CD4-positive, alpha-beta memory T cell (primary cell): ENCODE measurements at regions of chr19 and their contacts with region 1.

Region 1: DNA sequence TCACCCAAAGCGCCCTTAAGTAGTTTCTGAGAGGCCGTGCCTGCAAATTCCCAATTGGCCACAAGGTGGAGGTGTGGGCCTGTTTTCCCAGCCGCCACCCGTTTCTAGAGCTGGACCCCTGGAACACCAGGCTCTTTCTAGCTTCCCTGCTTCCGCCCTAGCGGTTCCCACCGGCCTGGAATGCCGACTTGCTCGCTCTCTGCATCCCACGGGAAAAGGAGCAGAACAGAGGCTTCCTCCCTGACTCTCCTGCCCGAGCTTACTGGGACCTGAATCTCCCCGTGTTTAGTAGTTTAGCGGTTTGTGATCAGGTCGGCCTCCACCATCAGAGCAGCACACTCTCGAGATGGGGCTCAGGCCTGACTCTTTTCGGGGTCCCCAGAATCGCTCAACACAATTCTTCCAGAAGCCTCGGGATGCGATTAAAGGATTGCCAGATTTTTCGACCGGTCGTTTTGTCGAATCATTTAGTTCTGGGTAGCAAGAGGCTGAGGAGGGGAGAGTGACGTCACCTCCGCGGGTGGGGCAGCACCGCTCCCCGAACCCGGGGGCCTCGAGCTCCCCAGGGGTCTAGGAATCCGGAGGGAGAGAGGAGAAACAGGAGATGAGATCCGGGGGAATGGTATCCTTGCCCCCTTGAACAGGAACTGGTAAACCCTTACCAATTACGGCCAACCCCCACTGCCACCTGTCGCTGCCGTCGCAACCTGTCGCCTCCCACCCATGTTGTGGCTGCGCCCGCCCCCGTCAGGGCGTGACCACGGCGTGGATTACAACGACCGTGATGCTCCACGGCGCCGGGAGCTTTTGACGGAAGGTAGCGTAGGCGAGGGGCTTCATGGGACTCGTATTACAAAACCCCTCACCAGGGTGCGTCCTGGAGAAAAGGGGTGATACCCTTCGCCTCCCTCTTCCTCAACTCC is 8.0 kb downstream of the NAPSA start:
- DNase-seq: peak; percentile 86 to 90 (median 88)
- H3K4me3 ChIP-seq: peak overlapping the region; percentile 45 to 69
- H3K4me3 Mint-ChIP-seq: peak overlapping the region; percentile 88 to 95 (median 91)
- H3K27ac ChIP-seq: peak overlapping the region; percentile 95
- H3K27ac Mint-ChIP-seq: peak overlapping the region; percentile 97 to 98 (median 98)
- H3K4me1 ChIP-seq: peaks cover 12% of the 10 kb centered on the region
- H3K4me1 Mint-ChIP-seq: peaks cover 14 to 47% (median 27%) of the 10 kb centered on the region in 4 donors
- H3K27me3 ChIP-seq: no peaks in the 10 kb centered on the region
- H3K27me3 Mint-ChIP-seq: peaks cover 0 to 2% of the 10 kb centered on the region in 2 donors

Region 2: GRCh38 chr19:50341091-50341564 is 16.3 kb before region 1 on chr19:
- CTCF ChIA-PET with region 1: interaction called, 10 read pairs
- POLR2A ChIA-PET with region 1: interaction called, 15 read pairs
- intact Hi-C with region 1: no loop called
- DNase-seq: no peak
- H3K4me3 ChIP-seq: no peak overlapping the region
- H3K4me3 Mint-ChIP-seq: no peak overlapping the region
- H3K27ac ChIP-seq: no peak overlapping the region
- H3K27ac Mint-ChIP-seq: no peak overlapping the region
- H3K4me1 ChIP-seq: no peaks in the 10 kb centered on the region
- H3K4me1 Mint-ChIP-seq: peaks cover 0 to 1% (median under 1%) of the 10 kb centered on the region in 4 donors
- H3K27me3 ChIP-seq: no peaks in the 10 kb centered on the region
- H3K27me3 Mint-ChIP-seq: peaks cover 1 to 3% of the 10 kb centered on the region in 2 donors

Region 3: DNA sequence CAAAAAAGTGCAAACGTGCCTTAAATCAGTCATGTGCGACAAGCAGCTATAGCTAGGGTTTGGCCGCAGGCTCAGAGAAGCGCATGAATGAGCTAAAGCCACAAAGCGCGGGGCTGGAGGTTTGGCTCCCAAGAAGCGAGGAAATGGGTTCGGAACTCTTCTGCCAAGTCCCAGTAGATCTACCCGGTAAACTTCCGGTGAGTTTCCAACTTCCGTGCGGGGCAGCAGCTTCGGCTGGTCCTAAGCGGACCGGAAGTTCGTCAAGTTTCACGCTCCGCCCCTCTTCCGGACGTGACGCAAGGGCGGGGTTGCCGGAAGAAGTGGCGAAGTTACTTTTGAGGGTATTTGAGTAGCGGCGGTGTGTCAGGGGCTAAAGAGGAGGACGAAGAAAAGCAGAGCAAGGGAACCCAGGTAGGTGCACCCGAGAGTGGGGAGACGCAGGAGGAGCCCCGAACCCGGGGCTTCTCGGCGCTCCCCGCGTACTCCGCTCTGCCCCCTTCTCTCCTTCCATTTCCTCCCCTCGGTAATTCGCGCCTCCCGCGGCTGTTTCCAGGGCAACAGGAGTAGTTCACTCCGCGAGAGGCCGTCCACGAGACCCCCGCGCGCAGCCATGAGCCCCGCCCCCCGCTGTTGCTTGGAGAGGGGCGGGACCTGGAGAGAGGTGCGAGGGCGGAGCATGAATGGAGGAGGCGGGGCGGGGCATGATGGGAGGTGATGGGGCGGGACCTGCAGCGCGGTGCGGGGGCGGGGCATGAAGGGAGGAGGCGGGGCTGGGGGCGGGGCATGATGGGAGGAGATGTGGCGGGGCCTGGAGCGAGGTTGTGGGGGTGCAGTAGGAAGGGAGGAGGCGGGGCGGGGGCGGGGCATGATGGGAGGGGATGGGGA is 19.0 kb after region 1 on chr19 and contains the start of gene NR1H2:
- CTCF ChIA-PET with region 1: interaction called, 11 read pairs
- POLR2A ChIA-PET with region 1: interaction called, 46 read pairs
- intact Hi-C with region 1: loop called (anchors 1 kb)
- DNase-seq: peak; percentile 95 to 96 (median 96)
- H3K4me3 ChIP-seq: peak within 1 kb of the TSS; percentile 94 to 97
- H3K4me3 Mint-ChIP-seq: peak within 1 kb of the TSS; percentile 87 to 98 (median 96)
- H3K27ac ChIP-seq: peak within 1 kb of the TSS; percentile 100
- H3K27ac Mint-ChIP-seq: peak within 1 kb of the TSS; percentile 94 to 100 (median 100)
- H3K4me1 ChIP-seq: peaks cover 14% of the 10 kb centered on the region
- H3K4me1 Mint-ChIP-seq: peaks cover 7 to 26% (median 14%) of the 10 kb centered on the region in 4 donors
- H3K27me3 ChIP-seq: no peaks in the 10 kb centered on the region
- H3K27me3 Mint-ChIP-seq: no peaks in the 10 kb centered on the region
- total RNA-seq, gene NR1H2: 103 to 109 TPM

Region 4: DNA sequence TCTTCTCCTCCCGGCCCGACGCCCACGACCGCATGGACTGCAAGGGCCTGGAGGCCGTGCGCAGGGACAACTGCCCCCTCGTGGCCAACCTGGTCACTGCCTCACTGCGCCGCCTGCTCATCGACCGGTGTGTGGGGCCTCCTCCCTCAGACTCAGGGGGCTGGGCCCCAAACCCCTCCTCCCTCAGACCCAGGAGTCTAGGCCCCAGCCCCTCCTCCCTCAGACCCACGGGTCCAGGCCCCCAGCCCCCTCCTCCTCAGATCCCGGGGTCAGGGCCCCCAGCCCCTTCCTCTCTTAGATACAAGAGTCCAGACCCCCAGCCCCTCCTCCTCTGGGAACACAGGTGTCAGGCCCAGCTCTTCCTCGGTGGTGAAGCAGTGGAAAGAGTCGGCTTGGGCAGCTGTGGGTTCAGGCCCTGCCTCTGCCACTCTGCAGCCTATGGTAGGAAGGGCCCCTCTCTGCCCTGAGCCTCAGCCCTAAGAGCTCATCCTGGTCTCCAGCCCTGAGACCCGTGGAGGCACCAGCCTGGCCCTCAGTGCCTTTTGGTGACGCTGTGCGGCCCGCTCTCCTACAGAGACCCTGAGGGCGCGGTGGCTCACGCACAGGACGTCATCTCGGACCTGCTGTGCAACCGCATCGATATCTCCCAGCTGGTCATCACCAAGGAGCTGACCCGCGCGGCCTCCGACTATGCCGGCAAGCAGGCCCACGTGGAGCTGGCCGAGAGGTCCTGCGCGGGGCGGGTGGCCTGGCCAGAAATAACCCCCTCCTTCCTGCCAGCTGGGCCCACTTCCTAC is 57.6 kb after region 1 on chr19:
- CTCF ChIA-PET with region 1: interaction called, 11 read pairs
- POLR2A ChIA-PET with region 1: interaction called, 8 read pairs
- intact Hi-C with region 1: loop called (anchors 1 kb)
- DNase-seq: peak; percentile 59 to 66 (median 64)
- H3K4me3 ChIP-seq: no peak overlapping the region
- H3K4me3 Mint-ChIP-seq: no peak overlapping the region
- H3K27ac ChIP-seq: no peak overlapping the region
- H3K27ac Mint-ChIP-seq: peak overlapping the region in 1 of 7 donors; percentile 41
- H3K4me1 ChIP-seq: no peaks in the 10 kb centered on the region
- H3K4me1 Mint-ChIP-seq: peaks cover 0 to 7% (median 3%) of the 10 kb centered on the region in 4 donors
- H3K27me3 ChIP-seq: no peaks in the 10 kb centered on the region
- H3K27me3 Mint-ChIP-seq: peaks cover 8 to 10% of the 10 kb centered on the region in 2 donors

Region 5: DNA sequence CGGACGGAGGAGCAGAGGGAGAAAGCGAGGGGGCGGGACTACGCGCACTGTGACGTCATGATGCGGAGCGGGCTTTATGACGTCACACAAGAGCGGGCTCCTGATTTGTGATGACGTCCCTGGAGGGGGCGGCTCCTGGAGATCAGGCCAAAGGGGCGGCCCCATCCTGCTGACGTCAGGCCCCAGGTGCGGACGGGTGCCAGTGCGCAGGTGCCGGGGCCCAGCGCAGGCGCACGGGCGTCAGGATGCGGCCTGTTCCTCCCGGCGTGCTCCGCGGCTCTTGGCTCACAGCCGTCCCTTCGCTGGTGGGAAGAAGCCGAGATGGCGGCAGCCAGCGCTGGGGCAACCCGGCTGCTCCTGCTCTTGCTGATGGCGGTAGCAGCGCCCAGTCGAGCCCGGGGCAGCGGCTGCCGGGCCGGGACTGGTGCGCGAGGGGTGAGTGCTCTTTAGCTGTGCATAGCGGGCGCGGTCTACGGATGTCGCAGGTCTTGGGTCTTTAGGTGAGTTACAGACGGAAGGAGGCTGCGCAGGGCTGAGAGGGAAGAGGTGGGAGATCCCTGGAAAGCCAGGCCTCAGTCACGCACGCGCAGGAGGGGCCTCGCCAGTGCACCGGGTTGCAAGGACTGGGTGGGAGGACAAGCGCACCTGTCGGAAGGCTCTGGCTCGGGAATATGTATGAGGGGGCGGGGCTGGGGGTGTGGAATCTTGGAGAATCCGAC is 118.9 kb after region 1 on chr19 and contains the starts of genes EMC10 and GARIN5A:
- CTCF ChIA-PET with region 1: interaction called, 4 read pairs
- POLR2A ChIA-PET with region 1: interaction called, 5 read pairs
- intact Hi-C with region 1: loop called (anchors 5 kb)
- DNase-seq: peak; percentile 94 to 96 (median 95)
- H3K4me3 ChIP-seq: peak within 1 kb of the TSS; percentile 66 to 85
- H3K4me3 Mint-ChIP-seq: peak within 1 kb of the TSS; percentile 95 to 99 (median 98)
- H3K27ac ChIP-seq: peak within 1 kb of the TSS; percentile 89
- H3K27ac Mint-ChIP-seq: peak within 1 kb of the TSS; percentile 94 to 98 (median 97)
- H3K4me1 ChIP-seq: peaks cover 25% of the 10 kb centered on the region
- H3K4me1 Mint-ChIP-seq: peaks cover 13 to 33% (median 24%) of the 10 kb centered on the region in 4 donors
- H3K27me3 ChIP-seq: no peaks in the 10 kb centered on the region
- H3K27me3 Mint-ChIP-seq: no peaks in the 10 kb centered on the region
- total RNA-seq, gene EMC10: 83.7 to 92.6 TPM
- total RNA-seq, gene GARIN5A: 0.61 TPM in 1 of 2 experiments, not detected in the other

Region 6: DNA sequence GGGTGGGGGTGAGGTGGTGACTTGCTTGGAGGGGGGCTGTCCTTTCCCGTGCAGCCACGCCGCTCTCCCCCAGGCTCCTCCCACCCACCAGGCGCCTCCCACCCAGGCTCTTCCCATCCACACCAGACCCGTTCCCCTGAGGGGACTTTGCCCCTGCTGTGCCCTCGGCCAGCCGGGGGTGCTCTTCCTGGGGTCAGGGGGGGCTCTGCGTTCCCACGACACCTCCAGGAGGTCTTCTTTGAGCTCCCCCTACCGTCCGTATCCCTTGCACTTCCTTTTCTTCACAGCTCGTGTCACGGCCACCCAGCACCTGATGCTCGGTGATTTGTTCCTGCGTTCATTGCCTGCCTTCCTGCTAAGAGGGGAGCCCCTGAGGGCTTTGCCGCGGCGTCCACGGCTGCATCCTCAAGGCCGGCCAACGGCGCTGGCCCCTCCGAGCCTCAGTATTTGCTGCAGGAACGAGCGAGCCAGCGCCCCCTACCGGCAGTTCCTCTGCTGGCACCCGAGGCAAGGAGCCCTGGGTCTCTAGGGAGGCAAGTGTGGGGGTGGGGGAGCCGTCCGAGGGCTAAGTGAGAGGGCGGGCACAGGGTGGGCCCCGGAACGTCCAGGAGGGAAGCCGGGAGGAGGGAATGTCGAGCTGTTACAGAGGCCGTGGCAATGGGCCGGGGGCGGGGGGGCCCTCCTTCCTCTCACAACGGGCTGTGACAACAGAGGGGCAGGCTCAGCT is 199.0 kb after region 1 on chr19:
- CTCF ChIA-PET with region 1: interaction called, 18 read pairs
- POLR2A ChIA-PET with region 1: no interaction called
- intact Hi-C with region 1: loop called (anchors 1 kb)
- DNase-seq: peak; percentile 57 to 66 (median 64)
- H3K4me3 ChIP-seq: peak overlapping the region; percentile 36 to 46
- H3K4me3 Mint-ChIP-seq: peak overlapping the region; percentile 85 to 96 (median 92)
- H3K27ac ChIP-seq: no peak overlapping the region
- H3K27ac Mint-ChIP-seq: peak overlapping the region in 5 of 7 donors; percentile 25 to 83 (median 65)
- H3K4me1 ChIP-seq: peaks cover 4% of the 10 kb centered on the region
- H3K4me1 Mint-ChIP-seq: peaks cover 5 to 15% (median 10%) of the 10 kb centered on the region in 4 donors
- H3K27me3 ChIP-seq: peaks cover 4% of the 10 kb centered on the region
- H3K27me3 Mint-ChIP-seq: peaks cover 37 to 56% of the 10 kb centered on the region in 2 donors

Region 7: GRCh38 chr19:50718255-50719118 is 361.0 kb after region 1 on chr19:
- CTCF ChIA-PET with region 1: no interaction called
- POLR2A ChIA-PET with region 1: no interaction called
- intact Hi-C with region 1: no loop called
- DNase-seq: no peak
- H3K4me3 ChIP-seq: no peak overlapping the region
- H3K4me3 Mint-ChIP-seq: peak overlapping the region in 1 of 8 donors; percentile 30
- H3K27ac ChIP-seq: no peak overlapping the region
- H3K27ac Mint-ChIP-seq: no peak overlapping the region
- H3K4me1 ChIP-seq: no peaks in the 10 kb centered on the region
- H3K4me1 Mint-ChIP-seq: peaks cover 2 to 33% (median 8%) of the 10 kb centered on the region in 4 donors
- H3K27me3 ChIP-seq: peaks cover 8% of the 10 kb centered on the region
- H3K27me3 Mint-ChIP-seq: peaks cover 40 to 61% of the 10 kb centered on the region in 2 donors

Region 8: DNA sequence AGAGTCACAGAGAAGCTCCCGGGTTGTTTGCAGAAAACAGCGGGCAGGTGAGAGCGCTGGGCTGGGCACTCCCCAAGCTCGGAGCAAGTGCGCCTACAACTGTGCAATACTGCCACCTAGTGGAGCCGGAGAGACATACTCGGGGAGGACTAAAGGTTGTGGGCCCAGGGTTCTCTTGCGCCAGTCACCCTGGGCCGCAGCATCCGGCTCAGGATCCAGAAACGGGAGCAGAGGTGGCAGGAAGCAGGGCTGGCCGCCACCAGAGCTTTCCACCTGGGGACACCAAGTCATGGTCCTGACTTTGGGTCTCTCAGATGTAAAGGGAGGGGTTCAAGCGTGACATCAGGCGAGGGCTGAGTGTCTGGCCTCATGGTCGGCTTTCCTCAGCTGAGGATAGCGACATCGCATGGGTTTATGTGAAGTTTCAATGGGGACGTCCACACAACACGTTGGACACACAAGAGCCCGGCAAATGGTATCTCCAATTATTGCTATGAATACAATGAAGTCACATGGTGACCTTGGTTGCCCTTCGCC is 564.9 kb after region 1 on chr19:
- CTCF ChIA-PET with region 1: interaction called, 12 read pairs
- POLR2A ChIA-PET with region 1: interaction called, 3 read pairs
- intact Hi-C with region 1: no loop called
- DNase-seq: peak; percentile 64 to 71 (median 68)
- H3K4me3 ChIP-seq: no peak overlapping the region
- H3K4me3 Mint-ChIP-seq: no peak overlapping the region
- H3K27ac ChIP-seq: no peak overlapping the region
- H3K27ac Mint-ChIP-seq: peak overlapping the region in 1 of 7 donors; percentile 55
- H3K4me1 ChIP-seq: peaks cover 5% of the 10 kb centered on the region
- H3K4me1 Mint-ChIP-seq: peaks cover 4 to 10% (median 7%) of the 10 kb centered on the region in 4 donors
- H3K27me3 ChIP-seq: no peaks in the 10 kb centered on the region
- H3K27me3 Mint-ChIP-seq: peaks cover 35 to 38% of the 10 kb centered on the region in 2 donors